GM18951 (cell line): ENCODE measurements at regions of chr17 and their contacts with region 1.

Region 1: GRCh38 chr17:58308173-58308984 is 20.2 kb downstream of the TSPOAP1 start:
- POLR2A ChIP-seq: no peak

Region 2: DNA sequence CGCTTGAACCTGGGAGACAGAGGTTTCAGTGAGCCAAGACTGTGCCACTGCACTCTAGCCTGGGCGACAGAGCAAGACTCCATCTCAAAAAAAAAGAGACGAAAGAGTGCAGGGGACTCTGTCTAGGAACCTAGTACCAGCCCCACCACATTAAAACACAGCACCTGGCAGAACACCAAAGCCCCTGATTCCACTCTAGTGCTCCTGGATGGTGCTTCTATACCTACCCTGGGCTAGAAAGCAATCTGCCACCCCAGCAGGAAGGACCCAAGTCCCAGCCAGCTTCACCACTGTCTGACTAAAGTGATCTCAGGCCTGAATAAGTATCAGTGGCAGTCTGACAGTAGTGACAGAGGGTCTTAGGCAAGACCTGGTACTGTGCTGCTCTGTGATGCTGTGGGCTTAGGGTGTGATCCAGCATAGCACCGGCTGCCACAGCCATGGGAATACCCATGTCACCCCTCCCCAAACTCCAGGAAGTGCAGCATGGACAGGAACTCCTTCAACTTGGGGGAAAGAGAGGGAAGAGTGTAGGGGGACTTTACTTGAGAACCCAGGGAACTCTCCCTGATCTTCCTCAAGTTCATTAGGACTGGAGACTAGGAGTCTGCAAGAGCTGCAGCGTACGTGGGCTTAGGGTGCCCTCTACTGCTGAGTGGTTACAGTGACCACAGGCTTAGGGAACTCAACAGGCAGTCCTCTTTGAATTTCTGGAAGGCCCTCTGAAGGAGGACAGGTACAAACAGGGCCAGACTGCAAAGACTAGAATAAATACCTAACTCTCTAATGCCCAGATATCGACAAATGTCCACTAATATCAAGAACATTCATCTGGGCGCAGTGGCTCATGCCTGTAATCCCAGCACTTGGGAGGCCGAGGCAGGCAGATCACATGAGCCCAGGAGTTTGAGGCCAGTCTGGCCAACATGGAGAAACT is 138.9 kb after region 1 on chr17:
- in situ Hi-C with region 1: loop called (anchors 5 kb)
- POLR2A ChIP-seq: no peak